Transverse colon (tissue), 4 donors: ENCODE measurements at regions of chr5 and their contacts with region 1.

Region 1: GRCh38 chr5:135279328-135279727 is 119.7 kb downstream of the MACROH2A1 start:
- DNase-seq: no peak
- H3K4me3 ChIP-seq: no peak overlapping the region
- H3K27ac ChIP-seq: no peak overlapping the region
- H3K4me1 ChIP-seq: no peaks in the 10 kb centered on the region
- H3K27me3 ChIP-seq: peaks cover 3% of the 10 kb centered on the region
- CTCF ChIP-seq: no peak
- EP300 ChIP-seq: no peak
- POLR2A ChIP-seq: no peak

Region 2: DNA sequence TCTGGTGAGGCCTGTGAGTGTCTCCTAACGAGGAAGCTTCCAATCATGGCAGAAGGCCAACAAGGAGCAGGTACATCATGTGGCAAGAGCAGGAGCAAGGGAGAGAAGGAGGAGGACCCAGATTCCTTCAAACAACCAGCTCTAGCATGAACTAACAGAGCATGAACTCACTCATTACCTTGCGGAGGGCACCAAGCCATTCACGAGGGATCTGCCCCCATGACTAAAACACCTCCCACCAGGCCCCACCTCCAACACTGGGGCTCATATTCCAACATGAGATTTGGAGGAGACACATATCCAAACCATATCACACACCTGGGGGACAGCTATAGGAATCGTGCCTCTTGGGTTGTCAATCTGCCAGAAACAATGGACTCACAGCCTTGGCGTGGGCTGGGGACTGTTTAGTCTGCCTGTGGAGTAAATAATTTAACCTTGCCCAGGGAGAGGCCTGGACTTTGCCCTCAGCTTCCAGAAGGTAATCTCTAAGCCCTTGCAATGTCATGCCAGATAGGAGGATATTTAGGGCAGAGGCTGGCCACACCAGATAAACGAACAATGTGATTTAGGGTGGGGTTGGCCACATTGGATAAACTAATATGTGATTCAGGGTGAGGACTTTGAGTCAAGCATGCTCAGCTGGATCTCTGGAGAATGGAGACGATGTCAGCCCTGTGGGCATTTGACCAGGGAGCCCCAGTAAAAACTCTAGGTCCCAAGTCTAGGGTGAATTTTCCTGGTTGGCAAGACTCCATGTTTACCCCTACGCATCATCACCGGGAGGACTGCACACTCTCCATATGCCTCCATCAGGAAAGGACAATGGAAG is 1261.0 kb before region 1 on chr5:
- in situ Hi-C with region 1: no loop called
- intact Hi-C with region 1: no loop called
- DNase-seq: peak; percentile 90
- H3K4me3 ChIP-seq: no peak overlapping the region
- H3K27ac ChIP-seq: peak overlapping the region; percentile 82 to 88 (median 86)
- H3K4me1 ChIP-seq: peaks cover 9 to 54% (median 33%) of the 10 kb centered on the region in 4 donors
- H3K27me3 ChIP-seq: no peaks in the 10 kb centered on the region
- CTCF ChIP-seq: no peak
- EP300 ChIP-seq: peak; percentile 59
- POLR2A ChIP-seq: peak; percentile 57

Region 3: GRCh38 chr5:135304352-135305165 is 25.2 kb after region 1 on chr5:
- in situ Hi-C with region 1: no loop called
- intact Hi-C with region 1: loop called (anchors 1 kb)
- DNase-seq: no peak
- H3K4me3 ChIP-seq: no peak overlapping the region
- H3K27ac ChIP-seq: no peak overlapping the region
- H3K4me1 ChIP-seq: no peaks in the 10 kb centered on the region
- H3K27me3 ChIP-seq: peaks cover 5% of the 10 kb centered on the region
- CTCF ChIP-seq: no peak
- EP300 ChIP-seq: no peak
- POLR2A ChIP-seq: no peak

Region 4: DNA sequence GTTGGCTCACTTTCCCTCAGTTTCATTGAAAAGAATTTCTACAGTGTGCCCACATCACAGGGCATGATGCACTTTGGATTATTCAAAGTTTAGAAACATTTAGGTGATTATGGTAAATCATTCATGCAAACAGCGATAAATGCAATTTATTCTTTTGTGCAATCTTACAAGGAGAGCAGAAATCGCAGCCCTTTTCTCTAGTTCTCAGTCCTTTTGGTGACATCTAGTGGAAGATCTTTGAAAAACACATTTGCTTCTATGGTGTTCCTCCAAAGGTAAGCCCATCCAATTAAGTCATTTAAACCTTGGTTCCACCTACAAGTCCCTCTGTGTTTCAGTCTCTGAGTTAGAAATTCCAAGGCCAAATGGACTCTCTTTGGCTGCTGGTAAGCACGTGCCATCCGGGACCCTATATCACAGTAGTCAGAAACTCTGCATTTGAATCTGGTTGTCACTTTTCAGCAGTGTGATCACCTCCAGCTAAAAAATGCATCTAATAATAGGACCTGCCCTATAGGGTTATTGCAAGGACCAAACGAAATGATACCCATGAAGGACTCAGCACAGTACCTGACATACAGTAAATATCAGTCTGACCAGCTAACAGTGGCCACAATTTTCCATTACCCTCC is 53.3 kb after region 1 on chr5:
- in situ Hi-C with region 1: no loop called
- intact Hi-C with region 1: no loop called
- DNase-seq: no peak
- H3K4me3 ChIP-seq: no peak overlapping the region
- H3K27ac ChIP-seq: no peak overlapping the region
- H3K4me1 ChIP-seq: peaks cover 0 to 3% (median 0%) of the 10 kb centered on the region in 4 donors
- H3K27me3 ChIP-seq: no peaks in the 10 kb centered on the region
- CTCF ChIP-seq: peak; percentile 42 to 57 (median 51)
- EP300 ChIP-seq: no peak
- POLR2A ChIP-seq: no peak